Activated B cell treated with CpG ODN at 0.5 μM for 24 hours (primary cell): ENCODE measurements at regions of chr7 and their contacts with region 1.

Region 1: DNA sequence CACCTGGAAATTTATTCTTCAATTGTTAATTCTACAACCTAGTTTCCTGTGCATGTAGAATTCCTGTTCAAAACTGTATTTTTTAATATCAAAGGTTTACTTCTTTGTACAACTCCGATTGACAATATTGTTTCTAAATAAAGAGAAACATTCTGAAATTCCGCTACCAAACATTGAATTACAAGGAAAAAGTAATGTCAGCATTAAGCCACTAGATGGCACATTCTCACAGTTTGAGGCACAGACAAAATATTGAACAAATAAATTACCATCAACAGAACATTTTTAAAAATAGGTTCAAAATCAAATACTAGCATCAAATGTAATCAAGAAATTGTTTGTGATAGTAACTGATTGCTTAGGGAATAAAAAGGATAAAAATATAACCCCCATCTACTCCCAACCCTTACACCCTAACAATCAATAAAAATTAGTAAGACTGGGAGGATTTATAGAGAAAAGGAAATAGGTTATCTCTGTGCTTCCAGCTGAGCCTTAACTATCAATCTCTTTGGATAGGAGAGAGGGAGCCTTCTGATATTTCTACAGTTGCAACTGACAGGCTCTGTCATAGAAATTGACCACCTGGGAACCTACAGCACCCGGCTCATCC is 86.6 kb upstream of the C7orf33 start:
- DNase-seq: no peak
- ATAC-seq: no peak
- H3K4me3 Mint-ChIP-seq: no peak overlapping the region
- H3K27ac Mint-ChIP-seq: peak overlapping the region; percentile 50
- H3K4me1 Mint-ChIP-seq: peaks cover 76% of the 10 kb centered on the region
- H3K27me3 Mint-ChIP-seq: no peaks in the 10 kb centered on the region
- CTCF ChIP-seq: no peak

Region 2: GRCh38 chr7:148262721-148263229 is 241.2 kb before region 1 on chr7:
- CTCF ChIA-PET with region 1: interaction called, 16 read pairs
- POLR2A ChIA-PET with region 1: no interaction called
- intact Hi-C with region 1: loop called (anchors 1 kb)
- DNase-seq: peak; percentile 60
- ATAC-seq: peak; percentile 88
- H3K4me3 Mint-ChIP-seq: peak overlapping the region; percentile 69
- H3K27ac Mint-ChIP-seq: no peak overlapping the region
- H3K4me1 Mint-ChIP-seq: peaks cover 27% of the 10 kb centered on the region
- H3K27me3 Mint-ChIP-seq: peaks cover 5% of the 10 kb centered on the region
- CTCF ChIP-seq: peak; percentile 94

Region 3: GRCh38 chr7:148515716-148516695 is 12.0 kb after region 1 on chr7:
- CTCF ChIA-PET with region 1: no interaction called
- POLR2A ChIA-PET with region 1: interaction called, 3 read pairs
- intact Hi-C with region 1: loop called (anchors 1 kb)
- DNase-seq: no peak
- ATAC-seq: no peak
- H3K4me3 Mint-ChIP-seq: no peak overlapping the region
- H3K27ac Mint-ChIP-seq: no peak overlapping the region
- H3K4me1 Mint-ChIP-seq: peaks cover 14% of the 10 kb centered on the region
- H3K27me3 Mint-ChIP-seq: no peaks in the 10 kb centered on the region
- CTCF ChIP-seq: no peak

Region 4: GRCh38 chr7:148563583-148564274 is 59.7 kb after region 1 on chr7:
- CTCF ChIA-PET with region 1: no interaction called
- POLR2A ChIA-PET with region 1: interaction called, 3 read pairs
- intact Hi-C with region 1: loop called (anchors 1 kb)
- DNase-seq: no peak
- ATAC-seq: peak; percentile 18
- H3K4me3 Mint-ChIP-seq: peak overlapping the region; percentile 66
- H3K27ac Mint-ChIP-seq: peak overlapping the region; percentile 81
- H3K4me1 Mint-ChIP-seq: peaks cover 18% of the 10 kb centered on the region
- H3K27me3 Mint-ChIP-seq: peaks cover 2% of the 10 kb centered on the region
- CTCF ChIP-seq: no peak

Region 5: DNA sequence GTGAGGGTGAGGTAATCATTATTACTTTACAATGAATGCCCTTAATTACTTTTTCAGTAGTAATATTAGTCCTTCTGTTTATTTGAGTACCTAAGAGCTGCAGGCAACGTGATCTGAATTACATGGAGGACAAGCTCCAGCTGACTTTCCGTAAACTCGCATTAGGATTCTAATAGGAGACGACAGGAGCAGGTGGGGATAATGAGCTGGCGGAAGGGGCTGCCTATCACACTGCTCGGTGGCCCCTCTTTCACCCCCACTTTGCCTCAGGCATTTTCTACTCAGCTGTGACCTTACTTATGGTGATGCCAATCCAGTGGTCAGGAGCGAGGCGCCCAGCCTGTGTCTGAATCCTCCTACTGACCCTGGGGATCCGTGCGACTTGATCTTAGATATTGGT is 86.5 kb after region 1 on chr7 and contains the start of gene C7orf33:
- CTCF ChIA-PET with region 1: no interaction called
- POLR2A ChIA-PET with region 1: no interaction called
- intact Hi-C with region 1: no loop called
- DNase-seq: no peak
- ATAC-seq: no peak
- H3K4me3 Mint-ChIP-seq: no peak within 1 kb of the TSS
- H3K27ac Mint-ChIP-seq: no peak within 1 kb of the TSS
- H3K4me1 Mint-ChIP-seq: no peaks in the 10 kb centered on the region
- H3K27me3 Mint-ChIP-seq: peaks cover 14% of the 10 kb centered on the region
- CTCF ChIP-seq: no peak
- total RNA-seq, gene C7orf33: not detected in 2 replicates

Region 6: DNA sequence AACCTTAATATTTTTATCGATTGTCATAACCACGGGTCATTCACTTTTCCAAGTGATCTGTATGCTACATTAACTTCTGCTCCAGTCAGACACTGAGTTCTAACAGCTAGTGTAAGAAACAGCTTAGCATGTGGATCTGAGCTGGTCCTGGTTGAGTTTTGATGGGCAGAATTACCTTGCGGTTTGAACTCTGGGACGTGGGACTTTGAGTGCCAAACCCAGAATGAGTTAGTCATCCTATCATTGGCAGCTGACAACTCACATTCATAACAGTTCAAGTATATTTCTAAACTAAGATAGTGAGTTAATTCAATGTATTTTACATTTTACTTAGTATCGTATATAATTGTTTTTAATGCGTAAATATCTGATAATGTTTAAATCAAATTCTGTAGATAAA is 129.8 kb after region 1 on chr7:
- CTCF ChIA-PET with region 1: no interaction called
- POLR2A ChIA-PET with region 1: interaction called, 4 read pairs
- intact Hi-C with region 1: loop called (anchors 5 kb)
- DNase-seq: no peak
- ATAC-seq: peak; percentile 61
- H3K4me3 Mint-ChIP-seq: peak overlapping the region; percentile 49
- H3K27ac Mint-ChIP-seq: peak overlapping the region; percentile 62
- H3K4me1 Mint-ChIP-seq: peaks cover 28% of the 10 kb centered on the region
- H3K27me3 Mint-ChIP-seq: no peaks in the 10 kb centered on the region
- CTCF ChIP-seq: no peak

Region 7: GRCh38 chr7:148884299-148885022 is 380.5 kb after region 1 on chr7:
- CTCF ChIA-PET with region 1: no interaction called
- POLR2A ChIA-PET with region 1: no interaction called
- intact Hi-C with region 1: loop called (anchors 2 kb)
- DNase-seq: peak; percentile 95
- ATAC-seq: peak; percentile 93
- H3K4me3 Mint-ChIP-seq: peak overlapping the region; percentile 87
- H3K27ac Mint-ChIP-seq: peak overlapping the region; percentile 82
- H3K4me1 Mint-ChIP-seq: peaks cover 26% of the 10 kb centered on the region
- H3K27me3 Mint-ChIP-seq: no peaks in the 10 kb centered on the region
- CTCF ChIP-seq: no peak

Region 8: DNA sequence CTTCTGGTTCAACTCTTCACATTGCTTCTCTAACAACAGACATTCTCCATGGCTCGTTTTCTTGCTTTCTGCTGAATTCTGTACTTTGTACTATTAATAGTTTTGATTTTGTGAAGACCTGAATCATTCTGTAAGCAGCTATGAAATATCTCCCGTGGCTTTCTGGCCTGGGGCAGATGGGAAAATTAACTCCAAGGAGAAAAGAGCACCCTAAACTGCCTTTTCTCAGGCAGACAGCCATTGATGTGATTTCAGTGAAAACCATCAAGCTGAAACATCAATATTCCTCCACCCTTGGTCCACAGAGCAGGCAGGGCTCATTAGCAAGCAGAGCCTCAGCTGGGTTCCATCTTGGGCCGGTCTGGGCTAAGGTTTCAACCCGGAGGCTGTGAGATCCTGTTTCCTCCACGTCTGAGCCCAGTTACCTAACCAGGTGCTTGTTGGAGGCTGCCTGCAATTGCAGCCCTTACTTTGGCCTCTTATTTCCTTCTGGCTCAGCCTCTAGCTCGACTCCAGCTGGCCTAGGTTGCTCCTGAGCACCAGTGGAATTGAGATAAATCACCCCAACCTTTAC is 401.2 kb after region 1 on chr7:
- CTCF ChIA-PET with region 1: no interaction called
- POLR2A ChIA-PET with region 1: no interaction called
- intact Hi-C with region 1: no loop called
- DNase-seq: no peak
- ATAC-seq: no peak
- H3K4me3 Mint-ChIP-seq: no peak overlapping the region
- H3K27ac Mint-ChIP-seq: no peak overlapping the region
- H3K4me1 Mint-ChIP-seq: no peaks in the 10 kb centered on the region
- H3K27me3 Mint-ChIP-seq: no peaks in the 10 kb centered on the region
- CTCF ChIP-seq: no peak

Region 9: DNA sequence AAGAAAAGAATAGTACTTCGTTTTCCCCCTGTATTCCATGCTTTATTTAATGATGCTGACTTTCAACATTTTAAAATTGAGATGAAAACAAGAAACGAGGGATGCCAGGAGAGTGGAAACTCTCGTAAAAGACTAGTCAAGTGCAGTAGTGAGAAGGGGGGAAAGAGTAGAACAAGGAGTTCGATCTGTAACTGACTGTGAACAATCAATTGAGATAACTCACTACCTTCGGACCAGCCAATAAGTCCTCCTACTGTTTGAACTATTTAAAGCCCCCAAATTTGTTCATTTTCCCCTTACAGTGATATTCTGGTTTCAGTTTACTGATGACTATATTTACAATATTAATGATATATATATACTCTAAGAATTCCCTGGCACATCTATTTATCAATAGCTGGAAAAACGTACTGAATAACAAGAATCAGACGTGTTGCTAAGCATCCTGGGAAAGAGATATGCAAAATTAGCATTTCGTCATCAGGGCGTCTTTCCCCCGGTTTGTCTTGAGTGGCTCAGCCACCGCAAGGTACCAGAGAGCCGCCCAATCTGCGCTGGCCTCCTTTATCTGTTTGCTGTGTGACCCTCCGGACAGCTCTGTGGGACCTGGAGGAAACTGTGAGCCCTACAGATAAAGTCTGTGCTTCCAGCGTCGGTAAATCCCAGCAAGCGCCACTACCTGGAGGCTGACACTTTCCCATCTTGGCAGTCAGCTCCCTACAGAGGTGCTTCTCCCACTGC is 483.2 kb after region 1 on chr7:
- CTCF ChIA-PET with region 1: no interaction called
- POLR2A ChIA-PET with region 1: no interaction called
- intact Hi-C with region 1: loop called (anchors 5 kb)
- DNase-seq: peak; percentile 60
- ATAC-seq: peak; percentile 85
- H3K4me3 Mint-ChIP-seq: peak overlapping the region; percentile 96
- H3K27ac Mint-ChIP-seq: peak overlapping the region; percentile 93
- H3K4me1 Mint-ChIP-seq: peaks cover 50% of the 10 kb centered on the region
- H3K27me3 Mint-ChIP-seq: peaks cover 2% of the 10 kb centered on the region
- CTCF ChIP-seq: no peak

Region 10: GRCh38 chr7:149385195-149385950 is 881.4 kb after region 1 on chr7:
- CTCF ChIA-PET with region 1: no interaction called
- POLR2A ChIA-PET with region 1: no interaction called
- intact Hi-C with region 1: no loop called
- DNase-seq: no peak
- ATAC-seq: no peak
- H3K4me3 Mint-ChIP-seq: no peak overlapping the region
- H3K27ac Mint-ChIP-seq: no peak overlapping the region
- H3K4me1 Mint-ChIP-seq: no peaks in the 10 kb centered on the region
- H3K27me3 Mint-ChIP-seq: peaks cover 16% of the 10 kb centered on the region
- CTCF ChIP-seq: no peak